Activated CD4-positive, alpha-beta T cell treated with anti-CD3 and anti-CD28 coated beads, Interleukin-2, amount 10 ng/mL, durations not matched to agents 24 days and 14 days (primary cell): ENCODE measurements at regions of chr15 and their contacts with region 1.

Region 1: GRCh38 chr15:40694688-40695468 is at the start of gene RAD51:
- DNase-seq: peak; percentile 99
- H3K4me3 Mint-ChIP-seq: peak within 1 kb of the TSS; percentile 100
- H3K27ac Mint-ChIP-seq: peak within 1 kb of the TSS; percentile 100
- H3K4me1 Mint-ChIP-seq: peaks cover 30% of the 10 kb centered on the region
- H3K27me3 Mint-ChIP-seq: no peaks in the 10 kb centered on the region
- total RNA-seq, gene RAD51: 67.5 and 70.3 TPM in 2 replicates

Region 2: GRCh38 chr15:40593588-40594428 is 101.1 kb before region 1 on chr15 and contains the start of gene KNL1:
- intact Hi-C with region 1: loop called (anchors 1 kb)
- DNase-seq: peak; percentile 98
- H3K4me3 Mint-ChIP-seq: peak within 1 kb of the TSS; percentile 88
- H3K27ac Mint-ChIP-seq: peak within 1 kb of the TSS; percentile 95
- H3K4me1 Mint-ChIP-seq: peaks cover 36% of the 10 kb centered on the region
- H3K27me3 Mint-ChIP-seq: no peaks in the 10 kb centered on the region
- total RNA-seq, gene KNL1: 25.3 and 25.6 TPM in 2 replicates

Region 3: DNA sequence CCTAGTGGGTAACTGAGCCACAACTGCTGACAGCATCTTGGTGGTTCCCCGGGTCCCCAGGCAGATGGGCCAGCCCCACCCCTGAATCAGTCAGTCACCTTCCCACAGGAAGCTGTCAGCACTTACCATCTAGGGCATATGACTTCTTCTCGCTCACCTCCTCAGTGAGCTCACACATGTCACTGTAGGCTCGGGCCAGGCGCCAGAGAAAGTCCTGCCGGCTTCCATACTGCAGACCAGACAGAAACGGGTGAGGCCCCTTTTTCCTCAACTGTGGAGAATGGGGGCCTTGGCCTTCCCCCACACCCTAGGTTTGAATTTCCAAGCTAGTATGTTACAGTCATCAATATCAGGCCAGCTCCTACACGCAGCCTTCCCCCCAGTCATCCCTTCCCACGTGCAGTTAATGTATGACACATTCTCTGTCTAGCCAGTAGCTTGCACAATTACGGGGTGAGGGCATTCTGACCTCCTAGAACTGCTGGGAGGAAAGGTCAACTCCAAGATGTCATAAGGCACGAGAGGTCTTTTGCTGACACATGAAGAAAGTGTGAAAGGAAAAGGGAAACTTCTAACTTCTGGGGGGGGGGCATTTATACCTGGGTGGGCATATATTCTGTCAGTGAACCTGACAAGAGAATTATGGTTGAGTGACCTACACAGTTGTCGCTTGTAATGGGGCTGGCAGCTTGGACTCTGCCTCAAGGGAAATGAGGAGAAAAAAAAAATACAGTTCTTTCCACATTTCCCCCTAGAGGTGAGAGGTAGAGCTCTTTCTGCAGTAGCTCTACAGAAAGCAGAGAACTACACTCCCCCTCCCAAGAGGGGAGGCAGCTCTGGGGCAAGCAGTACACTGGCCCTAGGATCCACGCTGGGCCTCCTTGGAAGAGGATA is 49.3 kb after region 1 on chr15:
- intact Hi-C with region 1: loop called (anchors 2 kb)
- DNase-seq: peak; percentile 91
- H3K4me3 Mint-ChIP-seq: peak overlapping the region; percentile 70
- H3K27ac Mint-ChIP-seq: peak overlapping the region; percentile 94
- H3K4me1 Mint-ChIP-seq: peaks cover 35% of the 10 kb centered on the region
- H3K27me3 Mint-ChIP-seq: no peaks in the 10 kb centered on the region

Region 4: GRCh38 chr15:40763801-40764732 is 69.2 kb after region 1 on chr15 and contains the start of gene GCHFR:
- intact Hi-C with region 1: loop called (anchors 2 kb)
- DNase-seq: peak; percentile 94
- H3K4me3 Mint-ChIP-seq: peak within 1 kb of the TSS; percentile 76
- H3K27ac Mint-ChIP-seq: peak within 1 kb of the TSS; percentile 89
- H3K4me1 Mint-ChIP-seq: peaks cover 27% of the 10 kb centered on the region
- H3K27me3 Mint-ChIP-seq: peaks cover 2% of the 10 kb centered on the region
- total RNA-seq, gene GCHFR: 34.7 and 37.2 TPM in 2 replicates

Region 5: DNA sequence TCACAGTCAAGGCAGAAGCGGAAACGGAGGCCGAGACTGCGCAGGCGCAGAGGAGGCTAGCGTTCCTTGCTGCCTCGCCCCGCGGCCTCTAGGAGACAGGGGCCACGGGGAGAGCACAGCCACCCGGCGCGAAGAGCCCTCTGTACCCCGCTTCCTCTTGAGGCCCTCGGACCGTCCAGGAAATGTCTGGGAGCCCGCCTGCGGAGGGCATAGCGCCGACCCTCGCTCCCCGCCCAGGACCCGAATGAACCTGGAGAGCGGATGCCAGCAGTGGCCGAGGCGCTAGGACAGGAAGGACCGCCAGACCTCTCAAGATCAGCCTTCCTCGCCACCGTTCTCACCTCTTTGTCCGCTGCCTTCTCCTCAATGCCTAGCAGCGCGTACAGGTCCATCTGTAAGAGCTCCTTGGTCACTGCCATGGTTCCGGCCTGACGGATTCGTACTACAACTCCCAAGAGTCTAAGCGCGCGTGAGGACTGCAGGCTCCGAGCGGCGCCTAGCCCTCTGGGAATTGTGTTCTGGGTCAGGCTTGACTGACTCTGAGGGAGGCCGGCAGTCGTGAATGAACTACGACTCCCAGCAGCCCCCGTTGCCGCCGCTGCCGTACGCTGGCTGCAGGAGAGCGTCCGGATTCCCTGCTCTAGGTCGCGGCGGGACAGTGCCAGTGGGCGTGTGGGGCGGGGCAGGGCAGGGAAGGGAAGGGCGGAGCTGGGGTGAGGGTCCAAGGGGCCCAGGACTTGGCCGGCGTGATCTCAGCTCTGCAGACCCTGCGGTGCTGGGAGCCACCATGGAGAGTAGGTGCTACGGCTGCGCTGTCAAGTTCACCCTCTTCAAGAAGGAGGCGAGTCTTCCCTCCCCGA is 112.4 kb after region 1 on chr15 and contains the starts of genes DNAJC17 and ZFYVE19:
- intact Hi-C with region 1: loop called (anchors 1 kb)
- DNase-seq: peak; percentile 98
- H3K4me3 Mint-ChIP-seq: peak within 1 kb of the TSS; percentile 93
- H3K27ac Mint-ChIP-seq: peak within 1 kb of the TSS; percentile 96
- H3K4me1 Mint-ChIP-seq: peaks cover 13% of the 10 kb centered on the region
- H3K27me3 Mint-ChIP-seq: no peaks in the 10 kb centered on the region
- total RNA-seq, gene DNAJC17: 53.8 and 54.3 TPM in 2 replicates
- total RNA-seq, gene ZFYVE19: 35.6 and 37.6 TPM in 2 replicates

Region 6: DNA sequence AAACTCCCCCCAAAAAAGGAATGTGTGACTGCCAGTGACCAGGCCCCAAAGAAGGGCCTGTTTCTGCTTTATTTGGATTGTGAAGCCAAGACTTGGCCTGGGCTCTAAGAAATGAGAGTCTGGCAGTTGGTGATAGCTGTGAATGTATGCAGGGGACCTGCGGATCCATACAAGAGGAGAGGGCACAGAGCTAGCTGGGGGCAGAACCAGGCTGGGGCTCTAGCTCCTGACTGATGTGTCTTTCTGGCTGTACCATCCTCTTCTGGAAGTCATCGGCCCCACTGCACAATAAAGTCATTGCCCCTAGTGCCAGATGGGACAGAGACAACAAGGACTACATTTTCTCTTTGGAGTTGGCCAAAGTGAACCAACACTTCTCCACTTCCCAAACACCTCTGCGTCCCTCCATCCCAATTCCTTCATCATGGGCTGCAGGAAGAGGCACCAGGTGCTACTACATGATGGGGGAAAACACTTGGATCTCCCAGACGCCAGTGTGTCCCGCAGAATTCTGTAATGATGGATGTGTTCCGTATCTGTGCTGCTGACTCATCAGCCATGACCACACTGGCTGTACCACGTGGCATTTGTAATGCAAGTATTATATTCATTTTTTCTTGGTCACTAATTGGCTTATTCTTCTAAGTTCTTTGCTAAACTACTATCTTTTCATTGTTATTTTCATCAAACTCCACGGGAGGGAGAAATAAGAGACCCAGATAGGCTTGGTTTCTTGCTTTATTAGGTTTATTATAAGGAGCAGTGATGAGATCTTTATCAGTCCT is 1463.3 kb after region 1 on chr15:
- intact Hi-C with region 1: no loop called
- DNase-seq: no peak
- H3K4me3 Mint-ChIP-seq: no peak overlapping the region
- H3K27ac Mint-ChIP-seq: peak overlapping the region; percentile 21
- H3K4me1 Mint-ChIP-seq: peaks cover 2% of the 10 kb centered on the region
- H3K27me3 Mint-ChIP-seq: no peaks in the 10 kb centered on the region